CD4-positive, alpha-beta memory T cell (primary cell): ENCODE measurements at regions of chr12 and their contacts with region 1.

Region 1: GRCh38 chr12:30847259-30847658 is 79.3 kb upstream of the TSPAN11 start:
- DNase-seq: peak in 4 of 5 donors; percentile 52 to 62 (median 58)
- H3K4me3 ChIP-seq: no peak overlapping the region
- H3K4me3 Mint-ChIP-seq: no peak overlapping the region
- H3K27ac ChIP-seq: no peak overlapping the region
- H3K27ac Mint-ChIP-seq: no peak overlapping the region
- H3K4me1 ChIP-seq: no peaks in the 10 kb centered on the region
- H3K4me1 Mint-ChIP-seq: peaks cover 4 to 14% (median 9%) of the 10 kb centered on the region in 4 donors
- H3K27me3 ChIP-seq: no peaks in the 10 kb centered on the region
- H3K27me3 Mint-ChIP-seq: no peaks in the 10 kb centered on the region

Region 2: GRCh38 chr12:29317556-29318363 is 1529.5 kb before region 1 on chr12:
- CTCF ChIA-PET with region 1: no interaction called
- POLR2A ChIA-PET with region 1: no interaction called
- intact Hi-C with region 1: loop called (anchors 10 kb)
- DNase-seq: peak; percentile 55 to 68 (median 63)
- H3K4me3 ChIP-seq: no peak overlapping the region
- H3K4me3 Mint-ChIP-seq: peak overlapping the region in 1 of 8 donors; percentile 35
- H3K27ac ChIP-seq: no peak overlapping the region
- H3K27ac Mint-ChIP-seq: peak overlapping the region in 5 of 7 donors; percentile 0 to 72 (median 48)
- H3K4me1 ChIP-seq: peaks cover 4% of the 10 kb centered on the region
- H3K4me1 Mint-ChIP-seq: peaks cover 8 to 12% (median 10%) of the 10 kb centered on the region in 4 donors
- H3K27me3 ChIP-seq: no peaks in the 10 kb centered on the region
- H3K27me3 Mint-ChIP-seq: no peaks in the 10 kb centered on the region

Region 3: DNA sequence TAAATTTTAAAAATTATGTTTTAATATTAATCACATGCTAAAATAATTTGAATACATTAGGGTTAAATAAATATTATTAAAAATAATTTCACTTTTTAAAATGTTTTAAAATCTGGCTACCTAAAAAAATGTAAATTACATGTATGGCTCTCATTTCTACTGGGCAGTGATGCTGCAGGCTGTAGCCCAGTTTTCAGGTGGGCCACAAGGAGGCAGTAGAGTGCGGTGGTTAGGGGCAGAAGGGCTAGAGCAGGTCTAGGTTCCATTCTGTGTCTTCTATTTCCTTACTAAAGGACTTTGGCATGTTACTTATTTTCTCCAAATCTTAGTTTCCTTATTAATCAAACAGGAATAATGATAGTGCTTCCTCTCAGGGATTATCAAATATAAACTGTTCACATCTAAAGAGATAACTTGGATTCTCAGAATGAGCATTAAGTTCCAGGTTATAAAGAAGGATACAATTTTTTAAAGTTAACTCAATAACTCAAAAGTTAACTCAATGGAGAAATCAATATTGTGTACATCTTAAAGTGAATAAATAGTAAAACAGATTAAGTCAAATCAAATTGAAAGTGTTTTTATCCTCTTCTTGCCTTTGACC is 1294.8 kb before region 1 on chr12:
- CTCF ChIA-PET with region 1: interaction called, 6 read pairs
- POLR2A ChIA-PET with region 1: no interaction called
- intact Hi-C with region 1: loop called (anchors 1 kb)
- DNase-seq: peak; percentile 41 to 51 (median 48)
- H3K4me3 ChIP-seq: no peak overlapping the region
- H3K4me3 Mint-ChIP-seq: no peak overlapping the region
- H3K27ac ChIP-seq: no peak overlapping the region
- H3K27ac Mint-ChIP-seq: no peak overlapping the region
- H3K4me1 ChIP-seq: no peaks in the 10 kb centered on the region
- H3K4me1 Mint-ChIP-seq: peaks cover 0 to 2% (median 0%) of the 10 kb centered on the region in 4 donors
- H3K27me3 ChIP-seq: no peaks in the 10 kb centered on the region
- H3K27me3 Mint-ChIP-seq: peaks cover 2 to 4% of the 10 kb centered on the region in 2 donors

Region 4: DNA sequence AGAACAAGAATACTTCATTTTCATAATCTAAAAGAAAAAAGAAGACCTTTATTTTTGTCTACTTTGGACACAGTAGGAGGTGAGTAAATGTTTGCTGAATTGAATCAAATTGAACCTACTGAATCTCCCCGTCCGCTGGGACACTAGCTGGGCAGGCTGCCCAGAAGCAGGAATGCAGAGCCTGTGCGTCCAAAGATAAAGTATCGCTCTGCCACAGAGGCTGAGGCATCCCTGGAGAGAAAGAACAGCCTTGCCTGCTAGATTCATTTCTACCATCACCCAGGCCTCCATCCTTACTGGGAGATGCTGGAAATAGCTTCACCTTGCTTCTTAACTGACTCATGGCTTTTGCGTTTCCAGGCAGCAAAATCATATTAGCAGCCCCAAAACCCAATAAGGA is 15.2 kb after region 1 on chr12:
- CTCF ChIA-PET with region 1: interaction called, 22 read pairs
- POLR2A ChIA-PET with region 1: no interaction called
- intact Hi-C with region 1: no loop called
- DNase-seq: no peak
- H3K4me3 ChIP-seq: no peak overlapping the region
- H3K4me3 Mint-ChIP-seq: no peak overlapping the region
- H3K27ac ChIP-seq: no peak overlapping the region
- H3K27ac Mint-ChIP-seq: no peak overlapping the region
- H3K4me1 ChIP-seq: no peaks in the 10 kb centered on the region
- H3K4me1 Mint-ChIP-seq: no peaks in the 10 kb centered on the region
- H3K27me3 ChIP-seq: no peaks in the 10 kb centered on the region
- H3K27me3 Mint-ChIP-seq: peaks cover 2 to 8% of the 10 kb centered on the region in 2 donors

Region 5: GRCh38 chr12:31238764-31239387 is 391.6 kb after region 1 on chr12:
- CTCF ChIA-PET with region 1: interaction called, 25 read pairs
- POLR2A ChIA-PET with region 1: no interaction called
- intact Hi-C with region 1: no loop called
- DNase-seq: peak; percentile 19 to 63 (median 31)
- H3K4me3 ChIP-seq: no peak overlapping the region
- H3K4me3 Mint-ChIP-seq: peak overlapping the region in 2 of 8 donors; percentile 58 to 60
- H3K27ac ChIP-seq: no peak overlapping the region
- H3K27ac Mint-ChIP-seq: no peak overlapping the region
- H3K4me1 ChIP-seq: no peaks in the 10 kb centered on the region
- H3K4me1 Mint-ChIP-seq: peaks cover 0 to 5% (median 2%) of the 10 kb centered on the region in 4 donors
- H3K27me3 ChIP-seq: no peaks in the 10 kb centered on the region
- H3K27me3 Mint-ChIP-seq: peaks cover 21 to 34% of the 10 kb centered on the region in 2 donors